MCF 10A (cell line): ENCODE measurements at regions of chr10 and their contacts with region 1.

Region 1: GRCh38 chr10:124092860-124093773 is at the start of gene CHST15:
- DNase-seq: peak; percentile 83
- H3K4me3 Mint-ChIP-seq: peak within 1 kb of the TSS; percentile 79
- H3K27ac Mint-ChIP-seq: peak within 1 kb of the TSS; percentile 54
- H3K4me1 Mint-ChIP-seq: peaks cover 25% of the 10 kb centered on the region
- H3K27me3 Mint-ChIP-seq: no peaks in the 10 kb centered on the region
- CTCF ChIP-seq: no peak
- total RNA-seq, gene CHST15: 32.8 and 38.8 TPM in 2 replicates

Region 2: DNA sequence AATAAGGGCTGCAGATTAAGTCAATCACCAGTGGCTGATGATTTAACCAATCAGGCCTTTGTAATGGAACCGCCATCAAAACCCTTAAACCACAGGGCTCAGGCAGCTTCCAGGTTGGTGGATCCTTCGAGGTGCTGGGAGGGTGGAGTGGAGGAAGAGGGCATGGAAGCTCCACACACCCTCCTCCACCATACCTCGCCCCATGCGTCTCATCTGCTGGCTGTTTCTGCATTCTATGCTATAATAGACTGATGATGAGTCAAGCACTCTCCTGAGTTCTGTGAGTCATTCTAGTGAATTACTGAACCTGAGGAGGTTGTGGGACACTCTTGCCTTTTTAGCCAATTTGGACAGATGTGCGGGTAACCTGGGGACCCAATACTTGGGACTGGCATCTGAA is 43.6 kb before region 1 on chr10:
- CTCF ChIA-PET with region 1: interaction called, 3 read pairs
- POLR2A ChIA-PET with region 1: interaction called, 3 read pairs
- intact Hi-C with region 1: loop called (anchors 5 kb)
- DNase-seq: peak; percentile 78
- H3K4me3 Mint-ChIP-seq: no peak overlapping the region
- H3K27ac Mint-ChIP-seq: peak overlapping the region; percentile 47
- H3K4me1 Mint-ChIP-seq: peaks cover 28% of the 10 kb centered on the region
- H3K27me3 Mint-ChIP-seq: no peaks in the 10 kb centered on the region
- CTCF ChIP-seq: no peak

Region 3: GRCh38 chr10:124063750-124064603 is 29.1 kb before region 1 on chr10:
- CTCF ChIA-PET with region 1: no interaction called
- POLR2A ChIA-PET with region 1: interaction called, 18 read pairs
- intact Hi-C with region 1: no loop called
- DNase-seq: peak; percentile 81
- H3K4me3 Mint-ChIP-seq: peak overlapping the region; percentile 35
- H3K27ac Mint-ChIP-seq: peak overlapping the region; percentile 78
- H3K4me1 Mint-ChIP-seq: peaks cover 25% of the 10 kb centered on the region
- H3K27me3 Mint-ChIP-seq: no peaks in the 10 kb centered on the region
- CTCF ChIP-seq: no peak

Region 4: GRCh38 chr10:124106241-124106879 is 13.2 kb after region 1 on chr10:
- CTCF ChIA-PET with region 1: interaction called, 4 read pairs
- POLR2A ChIA-PET with region 1: interaction called, 96 read pairs
- intact Hi-C with region 1: no loop called
- DNase-seq: peak; percentile 97
- H3K4me3 Mint-ChIP-seq: peak overlapping the region; percentile 70
- H3K27ac Mint-ChIP-seq: peak overlapping the region; percentile 99
- H3K4me1 Mint-ChIP-seq: peaks cover 40% of the 10 kb centered on the region
- H3K27me3 Mint-ChIP-seq: no peaks in the 10 kb centered on the region
- CTCF ChIP-seq: no peak

Region 5: DNA sequence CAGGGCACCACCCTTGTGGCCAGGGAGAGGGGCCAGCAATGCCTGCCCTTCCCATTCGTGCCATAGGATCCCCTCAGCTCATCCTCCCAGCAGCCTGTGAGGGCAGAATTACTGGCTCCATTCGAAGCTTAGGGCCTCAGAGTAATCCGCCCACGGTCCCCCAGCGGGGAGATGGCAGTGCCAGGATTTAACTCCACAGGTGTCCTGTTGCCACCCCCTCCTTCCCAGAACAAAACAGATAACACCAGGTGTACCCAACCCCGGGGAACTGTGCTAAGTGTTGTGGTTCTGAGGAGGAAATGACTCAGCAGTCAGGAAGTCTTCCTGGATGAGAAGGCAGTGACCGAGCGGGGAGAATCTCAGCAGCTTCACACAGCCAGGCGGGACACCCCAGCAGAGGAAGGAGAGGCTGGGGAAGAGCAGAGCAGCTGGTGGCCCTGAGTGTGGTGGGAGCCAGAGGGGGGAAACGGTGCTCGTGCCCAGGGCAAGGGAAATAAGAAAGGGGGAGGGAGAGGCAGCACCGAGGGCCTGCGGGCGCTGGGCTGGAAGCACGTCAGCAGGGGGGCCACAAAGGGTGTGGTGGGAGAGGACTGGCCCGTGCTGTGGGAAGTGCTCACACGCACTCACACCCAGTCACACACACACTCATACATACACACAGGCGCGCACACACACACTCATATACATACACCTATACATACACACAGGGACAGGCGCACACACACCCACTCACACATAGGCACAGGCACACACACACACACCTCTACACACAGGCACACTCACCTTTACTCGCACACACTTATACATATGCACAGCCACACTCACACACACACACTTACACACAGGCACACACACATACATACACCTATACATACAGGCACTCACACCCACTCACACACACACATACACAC is 60.1 kb after region 1 on chr10:
- CTCF ChIA-PET with region 1: no interaction called
- POLR2A ChIA-PET with region 1: interaction called, 18 read pairs
- intact Hi-C with region 1: loop called (anchors 2 kb)
- DNase-seq: peak; percentile 99
- H3K4me3 Mint-ChIP-seq: no peak overlapping the region
- H3K27ac Mint-ChIP-seq: no peak overlapping the region
- H3K4me1 Mint-ChIP-seq: peaks cover 11% of the 10 kb centered on the region
- H3K27me3 Mint-ChIP-seq: no peaks in the 10 kb centered on the region
- CTCF ChIP-seq: no peak

Region 6: DNA sequence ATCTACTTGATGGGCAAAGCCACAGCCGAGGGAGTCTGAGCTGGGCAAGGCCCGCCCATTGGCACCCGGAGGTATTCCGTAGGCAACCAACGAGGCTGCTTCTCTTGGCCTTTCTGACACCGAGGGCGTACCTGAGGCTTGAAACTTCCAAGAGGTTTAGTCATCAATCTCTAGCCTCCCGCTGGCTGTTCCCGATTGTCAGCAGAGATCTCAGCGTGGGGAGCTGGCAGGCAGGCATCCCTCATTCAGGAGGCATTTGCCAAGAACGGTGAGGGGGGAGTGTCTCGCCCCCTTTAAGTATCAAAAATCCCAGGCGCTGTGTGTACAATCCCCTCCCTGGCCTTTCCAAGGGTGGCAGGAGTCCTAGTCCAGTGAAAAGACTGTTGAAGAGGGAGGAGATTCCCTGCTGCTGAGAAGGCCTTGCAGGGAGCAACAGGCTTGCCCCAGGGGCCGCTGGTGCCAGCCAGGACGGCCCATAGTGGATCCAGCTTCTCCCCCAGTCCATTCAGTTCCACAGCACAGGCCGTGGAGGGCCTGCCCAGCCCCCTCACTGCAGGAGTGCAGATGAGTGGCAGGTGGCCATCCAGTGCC is 285.9 kb after region 1 on chr10:
- CTCF ChIA-PET with region 1: no interaction called
- POLR2A ChIA-PET with region 1: interaction called, 4 read pairs
- intact Hi-C with region 1: loop called (anchors 2 kb)
- DNase-seq: peak; percentile 94
- H3K4me3 Mint-ChIP-seq: no peak overlapping the region
- H3K27ac Mint-ChIP-seq: no peak overlapping the region
- H3K4me1 Mint-ChIP-seq: peaks cover 8% of the 10 kb centered on the region
- H3K27me3 Mint-ChIP-seq: no peaks in the 10 kb centered on the region
- CTCF ChIP-seq: no peak

Region 7: GRCh38 chr10:124470544-124471434 is 377.7 kb after region 1 on chr10:
- CTCF ChIA-PET with region 1: no interaction called
- POLR2A ChIA-PET with region 1: no interaction called
- intact Hi-C with region 1: no loop called
- DNase-seq: no peak
- H3K4me3 Mint-ChIP-seq: no peak overlapping the region
- H3K27ac Mint-ChIP-seq: no peak overlapping the region
- H3K4me1 Mint-ChIP-seq: no peaks in the 10 kb centered on the region
- H3K27me3 Mint-ChIP-seq: no peaks in the 10 kb centered on the region
- CTCF ChIP-seq: no peak